ENCODE measurements at regions of chr18 and their contacts with region 1.

Region 1: DNA sequence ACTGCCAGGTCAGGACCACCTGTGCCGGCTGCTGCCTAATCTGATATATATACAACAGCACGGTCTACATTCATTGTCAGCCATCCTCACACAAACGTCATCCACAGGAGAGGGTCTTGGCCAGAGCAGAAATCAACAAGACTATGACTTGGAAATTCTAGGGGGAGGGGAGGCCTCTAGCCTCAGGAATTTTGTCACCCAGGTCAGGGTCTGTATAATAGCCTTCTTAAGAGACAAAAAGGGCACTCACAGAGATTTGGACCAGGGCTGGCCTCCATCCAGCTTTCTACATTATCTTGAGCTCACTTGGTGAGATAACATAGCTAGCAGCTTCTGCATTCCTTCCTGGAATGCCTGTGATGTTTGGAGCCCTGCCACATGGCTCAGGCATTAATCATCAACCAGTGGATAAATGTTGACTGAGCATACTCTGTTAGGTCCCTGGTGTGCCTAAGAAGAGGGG is 50.4 kb upstream of the CTIF start:
- DNase-seq: peak; percentile 97
- H3K4me3 ChIP-seq: no peak overlapping the region
- H3K27ac ChIP-seq: peak overlapping the region; percentile 57
- H3K4me1 ChIP-seq: peaks cover 21% of the 10 kb centered on the region
- H3K27me3 ChIP-seq: no peaks in the 10 kb centered on the region
- CTCF ChIP-seq: no peak
- POLR2A ChIP-seq: peak; percentile 55

Region 2: GRCh38 chr18:48525671-48526070 is 37.3 kb after region 1 on chr18:
- CTCF ChIA-PET with region 1: no interaction called
- POLR2A ChIA-PET with region 1: no interaction called
- dilution Hi-C with region 1: no loop called
- intact Hi-C with region 1: no loop called
- DNase-seq: no peak
- H3K4me3 ChIP-seq: no peak overlapping the region
- H3K27ac ChIP-seq: no peak overlapping the region
- H3K4me1 ChIP-seq: no peaks in the 10 kb centered on the region
- H3K27me3 ChIP-seq: peaks cover 2 to 21% of the 10 kb centered on the region in 2 experiments
- CTCF ChIP-seq: no peak
- POLR2A ChIP-seq: no peak

Region 3: GRCh38 chr18:48545757-48546321 is 57.4 kb after region 1 on chr18:
- CTCF ChIA-PET with region 1: interaction called, 7 read pairs
- POLR2A ChIA-PET with region 1: no interaction called
- dilution Hi-C with region 1: no loop called
- intact Hi-C with region 1: loop called (anchors 1 kb)
- DNase-seq: peak; percentile 92
- H3K4me3 ChIP-seq: no peak overlapping the region
- H3K27ac ChIP-seq: peak overlapping the region; percentile 85
- H3K4me1 ChIP-seq: peaks cover 33% of the 10 kb centered on the region
- H3K27me3 ChIP-seq: no peaks in the 10 kb centered on the region
- CTCF ChIP-seq: no peak
- POLR2A ChIP-seq: no peak

Measured in endothelial cell of umbilical vein (primary cell).